ENCODE measurements at regions of chr16 and their contacts with region 1.

Region 1: GRCh38 chr16:48365581-48366164 is 19.5 kb downstream of the SIAH1 start:
- DNase-seq: peak; percentile 97
- H3K4me3 Mint-ChIP-seq: peak overlapping the region; percentile 78
- H3K27ac Mint-ChIP-seq: peak overlapping the region; percentile 96
- H3K4me1 Mint-ChIP-seq: peaks cover 68% of the 10 kb centered on the region
- H3K27me3 Mint-ChIP-seq: no peaks in the 10 kb centered on the region
- CTCF ChIP-seq: no peak

Region 2: GRCh38 chr16:48330841-48331192 is 34.9 kb before region 1 on chr16:
- CTCF ChIA-PET with region 1: no interaction called
- intact Hi-C with region 1: no loop called
- DNase-seq: no peak
- H3K4me3 Mint-ChIP-seq: no peak overlapping the region
- H3K27ac Mint-ChIP-seq: no peak overlapping the region
- H3K4me1 Mint-ChIP-seq: no peaks in the 10 kb centered on the region
- H3K27me3 Mint-ChIP-seq: no peaks in the 10 kb centered on the region
- CTCF ChIP-seq: no peak

Region 3: DNA sequence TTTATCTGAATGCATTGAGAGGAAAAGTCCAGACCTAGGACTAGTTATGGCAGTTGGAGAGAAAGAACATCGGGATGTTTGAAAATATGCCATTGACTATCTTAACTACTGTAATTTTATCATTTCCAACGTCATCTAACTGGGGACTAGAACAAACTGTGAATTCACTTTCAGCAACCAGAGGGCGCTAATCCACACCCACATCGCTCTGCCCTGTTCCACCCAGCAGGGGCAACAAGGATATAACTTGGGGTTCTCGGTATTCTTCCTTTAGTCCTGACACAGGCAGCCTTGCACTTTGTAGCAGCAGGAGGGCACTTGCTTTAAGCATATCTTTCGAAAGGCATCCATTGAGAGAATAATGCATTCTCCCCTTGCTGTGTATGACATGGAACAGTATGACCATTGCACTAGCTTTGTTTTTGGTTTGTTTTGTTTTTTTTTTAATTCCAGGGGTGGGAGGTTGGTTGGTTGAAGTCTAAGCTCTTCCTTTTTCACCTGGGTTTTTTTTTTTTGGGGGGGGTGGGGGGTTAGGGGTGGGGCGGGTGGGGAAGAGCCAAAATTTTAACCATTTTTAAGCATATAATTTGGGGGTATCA is 12.0 kb before region 1 on chr16:
- CTCF ChIA-PET with region 1: interaction called, 18 read pairs
- intact Hi-C with region 1: no loop called
- DNase-seq: peak; percentile 76
- H3K4me3 Mint-ChIP-seq: no peak overlapping the region
- H3K27ac Mint-ChIP-seq: no peak overlapping the region
- H3K4me1 Mint-ChIP-seq: no peaks in the 10 kb centered on the region
- H3K27me3 Mint-ChIP-seq: no peaks in the 10 kb centered on the region
- CTCF ChIP-seq: peak; percentile 80

Region 4: GRCh38 chr16:48384305-48384986 is 18.8 kb after region 1 on chr16:
- CTCF ChIA-PET with region 1: interaction called, 6 read pairs
- intact Hi-C with region 1: loop called (anchors 1 kb)
- DNase-seq: peak; percentile 73
- H3K4me3 Mint-ChIP-seq: peak overlapping the region; percentile 96
- H3K27ac Mint-ChIP-seq: peak overlapping the region; percentile 95
- H3K4me1 Mint-ChIP-seq: peaks cover 45% of the 10 kb centered on the region
- H3K27me3 Mint-ChIP-seq: no peaks in the 10 kb centered on the region
- CTCF ChIP-seq: no peak

Region 5: GRCh38 chr16:48409839-48410611 is 44.4 kb after region 1 on chr16:
- CTCF ChIA-PET with region 1: interaction called, 7 read pairs
- intact Hi-C with region 1: loop called (anchors 2 kb)
- DNase-seq: peak; percentile 76
- H3K4me3 Mint-ChIP-seq: peak overlapping the region; percentile 46
- H3K27ac Mint-ChIP-seq: peak overlapping the region; percentile 92
- H3K4me1 Mint-ChIP-seq: peaks cover 58% of the 10 kb centered on the region
- H3K27me3 Mint-ChIP-seq: no peaks in the 10 kb centered on the region
- CTCF ChIP-seq: no peak

Region 6: GRCh38 chr16:48526058-48526957 is 160.6 kb after region 1 on chr16:
- CTCF ChIA-PET with region 1: interaction called, 16 read pairs
- intact Hi-C with region 1: loop called (anchors 1 kb)
- DNase-seq: peak; percentile 85
- H3K4me3 Mint-ChIP-seq: no peak overlapping the region
- H3K27ac Mint-ChIP-seq: no peak overlapping the region
- H3K4me1 Mint-ChIP-seq: peaks cover 29% of the 10 kb centered on the region
- H3K27me3 Mint-ChIP-seq: no peaks in the 10 kb centered on the region
- CTCF ChIP-seq: peak; percentile 79

Region 7: GRCh38 chr16:48596326-48596725 is 230.7 kb after region 1 on chr16:
- CTCF ChIA-PET with region 1: no interaction called
- intact Hi-C with region 1: no loop called
- DNase-seq: no peak
- H3K4me3 Mint-ChIP-seq: no peak overlapping the region
- H3K27ac Mint-ChIP-seq: no peak overlapping the region
- H3K4me1 Mint-ChIP-seq: peaks cover 31% of the 10 kb centered on the region
- H3K27me3 Mint-ChIP-seq: no peaks in the 10 kb centered on the region
- CTCF ChIP-seq: no peak

Region 8: GRCh38 chr16:48623304-48624016 is 257.8 kb after region 1 on chr16:
- CTCF ChIA-PET with region 1: interaction called, 11 read pairs
- intact Hi-C with region 1: no loop called
- DNase-seq: peak; percentile 91
- H3K4me3 Mint-ChIP-seq: peak overlapping the region; percentile 80
- H3K27ac Mint-ChIP-seq: no peak overlapping the region
- H3K4me1 Mint-ChIP-seq: peaks cover 23% of the 10 kb centered on the region
- H3K27me3 Mint-ChIP-seq: peaks cover 17% of the 10 kb centered on the region
- CTCF ChIP-seq: peak; percentile 97